Cardiac septum (tissue), 1 donor: ENCODE measurements at regions of chr4 and their contacts with region 1.

Region 1: GRCh38 chr4:6640292-6641163 is at the start of gene MRFAP1:
- DNase-seq: peak; percentile 97
- total RNA-seq, gene MRFAP1: 262 TPM

Region 2: DNA sequence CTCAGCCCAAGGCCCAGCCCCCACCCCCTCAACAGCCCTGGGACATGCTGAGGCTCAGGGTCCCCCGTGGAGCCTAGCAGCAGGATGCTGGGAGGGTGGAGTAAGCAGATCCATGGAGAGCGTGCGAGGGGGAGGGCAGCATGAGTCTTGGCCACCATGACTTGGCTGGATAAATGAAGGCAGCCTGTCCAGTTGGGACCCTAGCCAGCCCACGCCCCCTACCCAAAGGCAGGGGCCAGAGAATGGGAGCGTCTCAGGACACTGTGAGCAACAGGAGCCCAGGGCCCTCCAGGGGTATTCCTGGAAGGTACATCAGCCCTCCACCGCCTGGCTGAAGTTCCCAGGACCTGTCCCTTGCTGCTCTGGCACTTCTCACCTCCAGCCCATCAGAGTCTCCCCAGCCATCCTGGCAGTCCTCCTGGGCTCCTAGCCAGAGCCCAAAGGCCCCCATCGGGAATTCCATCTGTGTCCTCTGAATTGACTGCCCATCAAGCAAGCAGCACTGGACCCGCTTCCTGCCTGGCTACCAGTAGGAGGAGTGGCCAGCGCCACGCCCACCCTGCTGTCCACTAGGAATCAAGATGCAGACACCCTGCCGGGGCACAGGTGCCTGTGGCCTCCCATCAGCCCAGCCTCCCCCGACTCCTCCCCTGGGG is 669.6 kb before region 1 on chr4:
- intact Hi-C with region 1: no loop called
- DNase-seq: peak; percentile 74

Region 3: DNA sequence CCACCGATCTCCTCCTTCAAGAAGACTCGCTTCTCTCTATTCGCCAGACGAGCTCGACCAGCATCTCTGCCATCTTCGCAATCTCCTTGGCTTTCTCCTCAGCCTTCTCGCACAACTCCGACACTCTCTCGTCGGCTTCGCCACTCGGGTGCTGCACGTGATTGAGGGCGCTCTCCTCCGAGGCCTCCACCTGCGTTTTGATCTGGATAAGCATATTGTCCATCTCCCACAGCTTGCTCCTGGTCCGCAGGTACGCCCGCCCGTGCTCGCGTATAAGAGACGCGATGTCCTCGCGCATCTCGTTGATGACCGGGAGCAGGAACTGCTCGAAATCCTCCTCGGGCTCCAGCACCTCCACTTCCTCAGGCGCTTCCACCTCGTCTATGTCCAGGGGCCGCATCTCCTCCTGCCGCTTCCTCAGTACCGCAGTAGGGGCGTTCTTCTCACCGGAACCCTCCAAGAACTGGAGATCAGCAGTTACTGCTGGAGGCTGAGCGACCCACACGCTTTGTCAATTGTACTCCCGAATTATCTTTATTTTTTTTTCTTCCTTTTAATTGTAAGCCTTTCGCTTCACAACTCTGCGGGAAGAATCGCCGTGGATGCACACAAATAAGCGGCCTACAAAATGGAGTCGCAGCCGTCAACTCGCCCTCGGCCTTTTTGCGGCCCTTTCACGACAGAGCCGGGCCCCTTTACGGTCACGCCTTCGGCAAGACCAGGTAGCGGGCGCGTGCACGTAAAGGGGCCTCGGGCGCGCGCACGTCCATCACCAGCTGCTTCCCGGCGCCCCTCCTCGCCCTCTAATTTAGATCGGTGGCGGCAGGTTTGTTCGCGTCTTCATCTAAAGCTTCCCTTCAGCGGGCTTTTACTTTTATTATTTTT is 68.9 kb after region 1 on chr4 and contains the start of gene MRFAP1L1:
- intact Hi-C with region 1: loop called (anchors 2 kb)
- DNase-seq: peak; percentile 97
- total RNA-seq, gene MRFAP1L1: 48.6 TPM

Region 4: DNA sequence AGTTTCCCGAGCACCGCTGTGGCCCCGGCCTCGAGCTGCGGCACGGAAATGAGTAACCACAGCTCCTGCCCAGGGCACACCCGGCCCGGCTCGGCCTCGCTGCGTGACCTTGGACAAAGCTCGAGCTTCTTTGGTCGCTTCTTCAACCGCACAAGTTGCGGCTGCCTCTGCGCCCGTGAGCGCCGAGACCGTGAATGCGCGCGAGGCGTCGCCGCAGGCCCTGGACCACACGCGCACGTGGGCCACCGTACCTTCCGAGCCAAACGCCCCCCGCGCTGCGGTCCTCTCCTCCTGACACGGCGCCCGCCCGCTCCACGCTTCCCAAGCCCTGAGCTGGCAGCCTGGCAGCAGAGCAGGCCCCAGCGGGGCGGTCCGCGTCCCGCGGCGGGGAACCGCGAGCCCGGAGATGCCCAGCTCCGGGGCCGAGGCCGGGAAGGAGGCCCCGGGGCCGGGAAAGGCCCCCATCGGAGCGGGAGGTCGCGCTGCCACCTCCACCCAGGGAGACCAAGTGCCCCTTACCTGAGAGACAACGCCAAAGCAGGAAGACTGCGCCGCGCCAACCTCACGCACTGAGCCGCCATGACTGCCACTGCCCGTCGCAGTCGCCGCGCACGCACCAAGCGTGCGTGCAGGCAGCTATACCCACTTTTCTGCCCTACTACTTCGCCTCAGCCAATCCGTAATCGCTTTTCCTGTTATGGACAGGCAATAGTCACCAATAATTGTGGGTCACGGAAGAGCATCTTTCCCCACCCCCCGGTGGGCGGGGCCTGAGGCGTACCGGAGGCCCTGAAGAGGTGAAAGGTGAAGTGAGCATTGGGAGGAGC is 427.1 kb after region 1 on chr4 and contains the start of gene GRPEL1:
- intact Hi-C with region 1: no loop called
- DNase-seq: no peak
- total RNA-seq, gene GRPEL1: 43.5 TPM

Region 5: DNA sequence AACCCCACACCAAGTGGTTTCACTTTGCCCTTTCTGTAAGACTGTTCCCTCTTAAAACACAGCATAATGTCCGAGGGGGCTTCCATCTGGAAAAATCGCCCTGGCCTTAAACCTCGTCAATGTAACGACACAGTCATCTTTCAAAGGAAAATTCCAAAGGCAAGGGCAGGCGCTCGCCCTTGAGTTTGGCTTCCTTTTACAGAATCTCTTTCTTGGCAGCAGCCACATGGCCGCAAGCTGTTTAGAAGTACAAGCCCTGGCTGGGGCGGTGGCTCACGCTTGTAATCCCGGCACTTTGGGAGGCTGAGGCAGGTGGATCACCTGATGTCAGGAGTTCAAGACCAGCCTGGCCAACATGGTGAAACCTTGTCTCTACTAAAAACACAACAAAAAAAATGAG is 454.4 kb after region 1 on chr4:
- intact Hi-C with region 1: no loop called
- DNase-seq: no peak